ENCODE measurements at regions of chr1 and their contacts with region 1.

Region 1: GRCh38 chr1:109984456-109985275 is at the start of gene AHCYL1:
- DNase-seq: peak; percentile 100
- ATAC-seq: peak; percentile 98
- H3K4me3 Mint-ChIP-seq: peak within 1 kb of the TSS; percentile 99
- H3K27ac Mint-ChIP-seq: peak within 1 kb of the TSS; percentile 98
- H3K4me1 Mint-ChIP-seq: peaks cover 43% of the 10 kb centered on the region
- H3K27me3 Mint-ChIP-seq: no peaks in the 10 kb centered on the region
- total RNA-seq, gene AHCYL1: 67.6 to 70.0 TPM

Region 2: GRCh38 chr1:109548321-109549267 is 436.1 kb before region 1 on chr1 and contains the start of gene GNAI3:
- CTCF ChIA-PET with region 1: interaction called, 31 read pairs
- DNase-seq: peak; percentile 99
- ATAC-seq: peak; percentile 94
- H3K4me3 Mint-ChIP-seq: peak within 1 kb of the TSS; percentile 95
- H3K27ac Mint-ChIP-seq: peak within 1 kb of the TSS; percentile 98
- H3K4me1 Mint-ChIP-seq: peaks cover 35% of the 10 kb centered on the region
- H3K27me3 Mint-ChIP-seq: no peaks in the 10 kb centered on the region
- total RNA-seq, gene GNAI3: 7.5 to 8.3 TPM

Region 3: GRCh38 chr1:109636201-109636952 is 348.3 kb before region 1 on chr1:
- CTCF ChIA-PET with region 1: interaction called, 137 read pairs
- DNase-seq: peak; percentile 35
- ATAC-seq: no peak
- H3K4me3 Mint-ChIP-seq: no peak overlapping the region
- H3K27ac Mint-ChIP-seq: no peak overlapping the region
- H3K4me1 Mint-ChIP-seq: peaks cover 12% of the 10 kb centered on the region
- H3K27me3 Mint-ChIP-seq: peaks cover 2% of the 10 kb centered on the region

Region 4: DNA sequence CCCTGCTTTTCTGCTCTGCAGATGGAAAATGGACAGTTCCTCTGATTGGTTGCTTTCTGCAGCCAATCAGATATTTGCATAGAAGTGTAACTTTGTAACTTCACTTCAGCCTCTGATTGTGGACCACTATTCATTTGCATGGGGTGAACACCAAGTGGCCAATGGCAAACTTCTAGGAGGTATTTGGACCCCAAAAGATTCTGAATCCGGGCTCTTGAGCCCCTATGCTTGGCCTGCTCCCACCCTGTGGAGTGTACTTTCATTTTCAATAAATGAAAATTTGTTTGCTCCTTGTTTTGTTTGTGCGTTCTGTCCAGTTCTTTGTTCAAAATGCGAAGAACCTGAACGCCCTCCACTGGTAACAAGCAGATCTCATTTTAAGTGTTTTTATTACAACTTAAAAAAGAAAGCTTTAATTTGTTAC is 335.2 kb before region 1 on chr1:
- CTCF ChIA-PET with region 1: interaction called, 137 read pairs
- DNase-seq: peak; percentile 21
- ATAC-seq: no peak
- H3K4me3 Mint-ChIP-seq: no peak overlapping the region
- H3K27ac Mint-ChIP-seq: no peak overlapping the region
- H3K4me1 Mint-ChIP-seq: peaks cover 7% of the 10 kb centered on the region
- H3K27me3 Mint-ChIP-seq: peaks cover 40% of the 10 kb centered on the region

Region 5: DNA sequence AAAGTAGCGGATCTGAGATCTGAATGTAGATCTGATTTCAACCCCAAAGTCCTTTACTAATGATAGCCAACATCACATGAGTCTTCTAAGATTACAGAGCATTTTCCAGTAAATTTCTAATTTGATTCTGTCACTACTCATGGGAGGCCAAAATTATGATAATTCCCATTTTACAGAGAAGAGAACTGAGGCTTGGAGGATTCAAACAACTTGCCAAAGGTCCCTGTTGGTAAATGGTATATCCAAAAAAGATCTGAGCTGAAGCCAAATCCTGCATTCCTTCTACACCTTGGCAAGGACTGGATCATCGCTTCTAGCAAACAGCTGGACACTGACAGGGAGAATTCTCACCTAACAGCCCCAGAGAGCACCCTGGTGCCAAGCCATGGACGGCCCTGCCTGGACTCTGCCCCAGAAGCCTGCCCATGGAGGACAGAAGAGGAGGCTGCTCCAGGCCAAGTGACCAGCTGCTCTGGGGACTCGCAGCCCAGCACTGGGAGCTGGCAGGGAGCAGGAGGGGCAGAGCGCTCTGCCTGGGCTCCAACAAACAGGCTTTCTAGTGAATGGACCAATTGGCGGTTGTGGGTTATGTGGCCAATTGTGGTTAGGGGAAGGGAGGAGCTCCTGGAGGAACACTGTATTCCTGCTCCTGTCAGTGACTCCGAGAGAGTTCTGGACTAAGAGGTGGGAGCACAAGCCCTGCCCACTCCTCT is 80.4 kb before region 1 on chr1:
- CTCF ChIA-PET with region 1: interaction called, 13 read pairs
- DNase-seq: no peak
- ATAC-seq: no peak
- H3K4me3 Mint-ChIP-seq: no peak overlapping the region
- H3K27ac Mint-ChIP-seq: no peak overlapping the region
- H3K4me1 Mint-ChIP-seq: peaks cover 50% of the 10 kb centered on the region
- H3K27me3 Mint-ChIP-seq: no peaks in the 10 kb centered on the region

Region 6: GRCh38 chr1:109923131-109923945 is 61.3 kb before region 1 on chr1:
- CTCF ChIA-PET with region 1: interaction called, 22 read pairs
- DNase-seq: no peak
- ATAC-seq: peak; percentile 37
- H3K4me3 Mint-ChIP-seq: no peak overlapping the region
- H3K27ac Mint-ChIP-seq: peak overlapping the region; percentile 10
- H3K4me1 Mint-ChIP-seq: peaks cover 20% of the 10 kb centered on the region
- H3K27me3 Mint-ChIP-seq: no peaks in the 10 kb centered on the region

Region 7: GRCh38 chr1:110011527-110012041 is 26.9 kb after region 1 on chr1:
- CTCF ChIA-PET with region 1: interaction called, 43 read pairs
- DNase-seq: peak; percentile 62
- ATAC-seq: peak; percentile 97
- H3K4me3 Mint-ChIP-seq: no peak overlapping the region
- H3K27ac Mint-ChIP-seq: peak overlapping the region; percentile 65
- H3K4me1 Mint-ChIP-seq: peaks cover 4% of the 10 kb centered on the region
- H3K27me3 Mint-ChIP-seq: no peaks in the 10 kb centered on the region

Measured in activated CD8-positive, alpha-beta memory T cell treated with anti-CD3 and anti-CD28 coated beads, Interleukin-2, amount 10 ng/mL, durations not matched to agents 7 days and 5 days (primary cell).